ENCODE measurements at regions of chr13 and their contacts with region 1.

Region 1: DNA sequence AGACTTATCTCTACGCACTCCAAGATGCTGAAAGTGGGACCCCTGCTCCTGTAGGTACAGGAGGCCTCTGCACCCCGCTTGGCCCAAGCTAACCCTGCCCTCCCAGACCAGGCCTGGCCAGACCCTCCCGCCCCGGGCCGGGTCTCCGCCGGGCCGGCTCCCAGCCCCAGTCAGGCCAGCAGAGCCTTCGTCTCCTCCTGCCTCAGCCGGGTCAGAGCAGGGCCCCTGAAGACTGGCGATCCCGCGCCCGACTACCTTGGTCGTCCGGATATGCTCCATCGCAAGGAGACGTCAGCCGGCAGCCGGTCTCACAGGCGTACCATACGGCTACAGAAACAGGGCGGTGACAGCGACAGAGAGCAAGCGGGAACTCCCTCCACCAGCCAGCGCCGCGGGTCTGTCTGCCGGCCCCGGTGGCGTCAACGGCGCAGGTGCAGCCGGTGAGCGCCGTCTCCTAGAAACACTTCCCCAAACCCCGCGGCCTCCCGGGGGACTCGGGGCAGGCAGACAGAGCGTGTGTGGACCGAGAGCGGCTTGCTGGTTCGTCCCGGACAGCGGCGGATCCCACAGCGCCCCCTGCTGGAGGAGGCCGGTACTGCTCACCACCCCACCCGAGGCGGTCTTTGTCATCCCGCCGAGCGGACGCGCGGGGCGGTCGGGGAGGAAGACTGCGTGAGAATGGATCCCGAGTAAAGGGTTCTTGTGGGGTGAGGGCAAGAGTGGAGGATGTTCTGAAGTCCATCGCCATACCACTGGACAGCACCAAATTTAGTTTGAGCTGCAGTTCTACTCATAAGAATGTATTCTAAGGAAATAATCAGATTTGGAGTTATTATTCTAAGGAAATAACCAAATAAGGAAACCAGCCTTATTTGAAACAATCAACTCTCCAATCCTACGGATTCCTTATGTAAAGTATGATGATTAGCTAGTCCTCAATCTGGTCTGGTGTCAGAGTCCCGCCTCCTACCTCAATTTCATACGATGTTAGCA is at the start of gene MTMR6:
- DNase-seq: peak; percentile 51
- ATAC-seq: peak; percentile 87
- H3K4me3 ChIP-seq: peak within 1 kb of the TSS; percentile 76 to 93
- H3K27ac ChIP-seq: peak within 1 kb of the TSS; percentile 74
- H3K4me1 ChIP-seq: peaks cover 10 to 20% of the 10 kb centered on the region in 2 experiments
- H3K27me3 ChIP-seq: no peaks in the 10 kb centered on the region
- CTCF ChIP-seq: peak; percentile 42 to 96 (median 92); a peak in 4 of 6 replicates
- POLR2A ChIP-seq: no peak
- RAD21 ChIP-seq: 0 out of 2 replicates have a peak, but pooled peaks have one; percentile 12
- total RNA-seq, gene MTMR6: 11.4 TPM

Region 2: GRCh38 chr13:25225970-25226369 is 61.3 kb before region 1 on chr13:
- CTCF ChIA-PET with region 1: no interaction called
- POLR2A ChIA-PET with region 1: no interaction called
- RAD21 ChIA-PET with region 1: no interaction called
- intact Hi-C with region 1: loop called (anchors 10 kb)
- DNase-seq: no peak
- ATAC-seq: peak; percentile 61; the same call in 1 of the 2 replicates
- H3K4me3 ChIP-seq: no peak overlapping the region
- H3K27ac ChIP-seq: no peak overlapping the region
- H3K4me1 ChIP-seq: no peaks in the 10 kb centered on the region
- H3K27me3 ChIP-seq: peaks cover 5% of the 10 kb centered on the region; the same call in 1 of the 2 replicates
- CTCF ChIP-seq: no peak
- POLR2A ChIP-seq: no peak
- RAD21 ChIP-seq: no peak

Measured in HCT116 (cell line).